AG04449 (cell line): ENCODE measurements at regions of chr17 and their contacts with region 1.

Region 1: DNA sequence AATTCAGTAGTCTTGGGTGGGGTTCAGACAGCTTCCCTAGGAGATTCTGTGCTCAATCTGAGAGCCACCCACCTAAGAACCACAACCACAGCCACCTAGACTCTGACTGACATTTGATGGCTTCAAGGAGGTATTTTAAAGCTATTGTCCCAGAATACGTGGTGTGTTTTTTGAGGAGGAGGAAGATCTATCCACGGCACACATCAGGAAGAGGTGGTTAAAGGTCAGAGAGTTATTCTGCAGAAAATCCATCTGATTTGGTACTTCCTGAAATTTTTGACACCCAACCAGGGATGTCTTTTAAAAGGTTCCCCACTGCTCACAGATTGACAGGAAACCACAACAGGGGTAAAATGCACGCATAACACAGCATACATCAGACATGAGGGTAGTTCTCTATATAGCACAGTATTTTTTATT is 25.1 kb downstream of the SMARCE1 start:
- DNase-seq: no peak
- H3K4me3 ChIP-seq: no peak overlapping the region
- CTCF ChIP-seq: no peak

Region 2: GRCh38 chr17:40602775-40603551 is 19.6 kb before region 1 on chr17:
- CTCF ChIA-PET with region 1: interaction called, 20 read pairs
- POLR2A ChIA-PET with region 1: no interaction called
- DNase-seq: no peak
- H3K4me3 ChIP-seq: no peak overlapping the region
- CTCF ChIP-seq: no peak

Region 3: GRCh38 chr17:40610359-40610758 is 12.2 kb before region 1 on chr17:
- CTCF ChIA-PET with region 1: interaction called, 25 read pairs
- POLR2A ChIA-PET with region 1: no interaction called
- DNase-seq: no peak
- H3K4me3 ChIP-seq: no peak overlapping the region
- CTCF ChIP-seq: no peak

Region 4: GRCh38 chr17:40633871-40634270 is 11.4 kb after region 1 on chr17:
- CTCF ChIA-PET with region 1: interaction called, 31 read pairs
- POLR2A ChIA-PET with region 1: no interaction called
- DNase-seq: no peak
- H3K4me3 ChIP-seq: no peak overlapping the region
- CTCF ChIP-seq: no peak

Region 5: DNA sequence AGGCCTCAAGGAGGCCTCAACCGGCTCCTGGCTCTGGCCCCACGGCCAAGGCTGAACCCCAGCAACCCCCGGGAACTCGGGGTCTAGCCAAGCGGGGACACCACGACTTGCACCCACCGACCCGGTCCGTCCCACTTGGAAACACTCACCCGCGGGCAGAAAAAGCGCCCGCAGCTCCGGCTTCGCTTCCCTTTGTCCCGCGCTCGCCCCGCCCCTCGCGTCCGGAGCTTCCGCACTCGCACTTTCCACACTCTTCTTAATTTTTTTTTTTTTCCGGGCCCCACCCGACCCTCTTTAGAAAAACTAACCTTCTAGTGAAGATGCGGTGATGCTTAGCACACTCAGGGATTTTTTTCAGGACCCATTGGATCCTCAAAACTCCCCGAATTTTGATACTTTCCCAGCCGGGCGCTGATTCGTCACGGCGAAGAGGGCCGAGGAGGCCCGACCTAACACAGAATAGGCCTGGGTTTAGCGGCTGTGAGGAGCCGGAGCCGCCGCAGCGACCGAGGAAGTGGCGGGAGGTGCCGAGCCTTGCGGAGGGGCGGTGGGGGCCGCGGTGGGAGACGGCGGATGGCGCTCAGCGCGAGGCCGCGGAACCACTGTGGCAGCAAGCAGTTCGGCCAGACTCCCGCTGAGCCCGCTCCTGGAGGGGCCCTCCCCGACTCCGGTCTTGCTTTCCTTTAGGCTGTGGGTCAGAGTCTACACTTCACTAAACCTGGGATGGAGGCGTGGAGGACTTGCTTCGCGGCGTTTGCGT is 25.3 kb after region 1 on chr17 and contains the start of gene SMARCE1:
- CTCF ChIA-PET with region 1: interaction called, 20 read pairs
- POLR2A ChIA-PET with region 1: interaction called, 3 read pairs
- DNase-seq: no peak
- H3K4me3 ChIP-seq: peak within 1 kb of the TSS; percentile 83
- CTCF ChIP-seq: no peak

Region 6: GRCh38 chr17:40735016-40735415 is 112.5 kb after region 1 on chr17:
- CTCF ChIA-PET with region 1: no interaction called
- POLR2A ChIA-PET with region 1: no interaction called
- DNase-seq: no peak
- H3K4me3 ChIP-seq: no peak overlapping the region
- CTCF ChIP-seq: no peak

Region 7: GRCh38 chr17:40791787-40792436 is 169.4 kb after region 1 on chr17:
- CTCF ChIA-PET with region 1: interaction called, 159 read pairs
- POLR2A ChIA-PET with region 1: no interaction called
- DNase-seq: no peak
- H3K4me3 ChIP-seq: no peak overlapping the region
- CTCF ChIP-seq: peak; percentile 48